PC-3 (cell line): ENCODE measurements at regions of chr4 and their contacts with region 1.

Region 1: DNA sequence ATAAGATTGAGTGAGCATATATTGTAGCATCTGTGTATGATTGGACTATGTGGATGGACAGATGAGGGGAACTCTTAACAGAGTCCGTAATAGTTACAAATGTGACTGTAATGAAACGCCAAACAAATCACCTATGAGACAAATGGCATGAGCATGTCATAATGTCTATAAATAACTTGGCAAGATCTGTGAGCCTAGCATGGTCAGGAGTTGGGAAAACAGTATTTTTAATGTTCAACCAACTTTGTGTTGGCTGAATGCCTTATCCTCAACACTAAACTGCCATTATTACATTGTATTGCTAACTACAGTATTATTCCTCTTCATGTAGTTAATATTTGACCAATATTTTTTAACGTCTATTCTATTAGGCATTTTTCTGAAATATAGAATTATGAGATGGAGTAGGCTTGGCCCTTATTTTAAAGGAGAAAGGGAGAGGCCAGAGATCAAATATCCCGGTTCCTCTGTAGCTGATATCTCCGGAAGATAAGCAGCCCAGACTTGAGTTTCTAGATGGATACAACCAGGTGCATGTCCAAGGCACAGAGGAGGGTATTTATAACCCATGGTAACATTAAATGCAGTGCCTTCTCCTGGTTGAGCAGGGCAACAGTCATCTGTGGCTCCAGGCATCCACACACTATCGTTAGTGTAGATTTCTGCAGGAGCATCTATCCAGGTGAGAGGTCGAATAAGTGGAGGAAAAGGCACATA is 32.7 kb downstream of the PF4 start:
- DNase-seq: no peak
- ATAC-seq: no peak
- H3K4me3 ChIP-seq: no peak overlapping the region
- H3K27ac ChIP-seq: no peak overlapping the region
- H3K4me1 ChIP-seq: no peaks in the 10 kb centered on the region
- H3K27me3 ChIP-seq: no peaks in the 10 kb centered on the region
- CTCF ChIP-seq: no peak

Region 2: GRCh38 chr4:73964862-73965611 is 15.9 kb after region 1 on chr4:
- CTCF ChIA-PET with region 1: no interaction called
- POLR2A ChIA-PET with region 1: no interaction called
- intact Hi-C with region 1: no loop called
- DNase-seq: no peak
- ATAC-seq: no peak; the same call in 1 of the 2 replicates
- H3K4me3 ChIP-seq: no peak overlapping the region
- H3K27ac ChIP-seq: no peak overlapping the region
- H3K4me1 ChIP-seq: no peaks in the 10 kb centered on the region
- H3K27me3 ChIP-seq: no peaks in the 10 kb centered on the region
- CTCF ChIP-seq: peak; percentile 42

Region 3: DNA sequence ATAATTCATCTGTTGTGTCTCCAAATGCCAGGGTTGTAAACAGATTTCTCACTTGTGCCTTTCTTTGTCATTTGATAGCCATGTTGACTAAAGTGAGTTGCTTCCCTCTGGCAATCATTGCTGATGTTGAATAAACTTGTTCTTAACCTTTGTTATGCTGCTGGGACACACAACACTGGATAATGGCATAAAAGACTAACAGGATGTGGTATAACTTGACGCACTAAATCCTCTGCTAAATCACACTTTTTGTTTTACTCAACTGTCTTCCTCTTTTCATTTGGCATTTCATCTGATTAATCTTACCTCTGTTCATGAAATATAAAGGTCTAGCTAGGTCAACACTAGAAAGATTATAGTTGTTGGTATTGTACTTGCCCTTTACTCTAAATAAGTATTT is 66.9 kb after region 1 on chr4:
- CTCF ChIA-PET with region 1: no interaction called
- POLR2A ChIA-PET with region 1: no interaction called
- intact Hi-C with region 1: loop called (anchors 5 kb)
- DNase-seq: peak; percentile 94
- ATAC-seq: peak; percentile 94
- H3K4me3 ChIP-seq: no peak overlapping the region
- H3K27ac ChIP-seq: peak overlapping the region; percentile 91
- H3K4me1 ChIP-seq: peaks cover 24% of the 10 kb centered on the region
- H3K27me3 ChIP-seq: no peaks in the 10 kb centered on the region
- CTCF ChIP-seq: no peak